ENCODE measurements at regions of chr5 and their contacts with region 1.

Region 1: DNA sequence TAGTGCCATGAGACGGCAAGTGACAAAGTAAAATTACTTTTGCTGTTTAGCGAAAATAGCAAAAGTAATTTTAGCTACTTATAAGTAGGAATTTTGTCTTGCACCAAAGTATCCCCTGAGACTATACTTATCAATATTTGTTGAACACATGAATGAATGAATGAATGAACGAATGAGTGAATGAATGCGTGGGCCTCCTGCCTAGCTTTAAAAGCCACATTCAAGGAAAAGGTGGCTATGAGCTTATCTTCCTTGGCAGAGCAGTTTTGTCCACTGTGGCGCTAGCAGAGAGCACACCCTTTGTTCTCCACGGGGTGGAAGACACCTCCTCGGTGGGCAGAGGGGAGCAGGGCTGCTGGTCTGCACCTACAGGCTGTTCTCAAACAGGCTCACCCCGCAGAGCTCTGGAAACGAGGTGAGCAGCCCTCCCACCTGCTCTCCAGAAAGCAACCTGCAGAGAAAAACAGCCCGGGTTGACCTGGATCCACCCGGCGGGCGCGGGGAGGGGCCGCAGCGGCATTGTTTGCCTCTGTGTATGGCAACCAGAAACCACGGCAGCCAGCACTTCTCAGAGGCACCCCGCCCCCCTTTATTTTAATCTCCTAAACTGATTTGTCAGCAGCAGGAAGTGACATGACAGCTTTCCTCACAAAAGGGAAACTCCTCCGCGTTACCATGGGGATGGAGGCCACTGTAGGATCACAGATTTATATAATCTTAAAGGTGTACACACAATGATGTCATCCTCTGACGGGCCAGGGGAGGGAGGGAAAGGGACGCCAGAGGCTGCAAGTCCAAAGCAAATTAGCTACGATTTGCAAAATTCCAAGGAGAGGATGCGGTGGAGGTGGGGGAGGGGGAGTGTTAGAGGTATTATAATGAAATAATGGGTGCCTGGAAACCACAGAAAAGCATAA is 5.9 kb downstream of the DUSP1 start:
- DNase-seq: peak; percentile 90 to 99
- ATAC-seq: peak; percentile 62 to 82 (median 64)
- H3K4me3 ChIP-seq: peak overlapping the region; percentile 43
- H3K4me3 Mint-ChIP-seq: peak overlapping the region; percentile 90
- H3K27ac ChIP-seq: peak overlapping the region; percentile 92
- H3K27ac Mint-ChIP-seq: peak overlapping the region; percentile 98 to 99
- H3K4me1 ChIP-seq: peaks cover 42% of the 10 kb centered on the region
- H3K4me1 Mint-ChIP-seq: peaks cover 46 to 54% of the 10 kb centered on the region in 2 donors
- H3K27me3 ChIP-seq: no peaks in the 10 kb centered on the region
- H3K27me3 Mint-ChIP-seq: no peaks in the 10 kb centered on the region
- CTCF ChIP-seq: no peak

Region 2: GRCh38 chr5:172179361-172179989 is 585.6 kb before region 1 on chr5:
- intact Hi-C with region 1: loop called (anchors 5 kb)
- DNase-seq: peak; percentile 60 to 76
- ATAC-seq: peak; percentile 24 to 38 (median 28)
- H3K4me3 ChIP-seq: peak overlapping the region; percentile 28
- H3K4me3 Mint-ChIP-seq: peak overlapping the region; percentile 90
- H3K27ac ChIP-seq: peak overlapping the region; percentile 95
- H3K27ac Mint-ChIP-seq: peak overlapping the region; percentile 97 to 98
- H3K4me1 ChIP-seq: peaks cover 98% of the 10 kb centered on the region
- H3K4me1 Mint-ChIP-seq: peaks cover 76 to 77% of the 10 kb centered on the region in 2 donors
- H3K27me3 ChIP-seq: no peaks in the 10 kb centered on the region
- H3K27me3 Mint-ChIP-seq: no peaks in the 10 kb centered on the region
- CTCF ChIP-seq: no peak

Region 3: GRCh38 chr5:172733131-172733973 is 31.8 kb before region 1 on chr5:
- intact Hi-C with region 1: no loop called
- DNase-seq: no peak
- ATAC-seq: no peak
- H3K4me3 ChIP-seq: no peak overlapping the region
- H3K4me3 Mint-ChIP-seq: no peak overlapping the region
- H3K27ac ChIP-seq: no peak overlapping the region
- H3K27ac Mint-ChIP-seq: no peak overlapping the region
- H3K4me1 ChIP-seq: no peaks in the 10 kb centered on the region
- H3K4me1 Mint-ChIP-seq: no peaks in the 10 kb centered on the region
- H3K27me3 ChIP-seq: no peaks in the 10 kb centered on the region
- H3K27me3 Mint-ChIP-seq: peaks cover 24% of the 10 kb centered on the region in 2 donors
- CTCF ChIP-seq: no peak

Region 4: DNA sequence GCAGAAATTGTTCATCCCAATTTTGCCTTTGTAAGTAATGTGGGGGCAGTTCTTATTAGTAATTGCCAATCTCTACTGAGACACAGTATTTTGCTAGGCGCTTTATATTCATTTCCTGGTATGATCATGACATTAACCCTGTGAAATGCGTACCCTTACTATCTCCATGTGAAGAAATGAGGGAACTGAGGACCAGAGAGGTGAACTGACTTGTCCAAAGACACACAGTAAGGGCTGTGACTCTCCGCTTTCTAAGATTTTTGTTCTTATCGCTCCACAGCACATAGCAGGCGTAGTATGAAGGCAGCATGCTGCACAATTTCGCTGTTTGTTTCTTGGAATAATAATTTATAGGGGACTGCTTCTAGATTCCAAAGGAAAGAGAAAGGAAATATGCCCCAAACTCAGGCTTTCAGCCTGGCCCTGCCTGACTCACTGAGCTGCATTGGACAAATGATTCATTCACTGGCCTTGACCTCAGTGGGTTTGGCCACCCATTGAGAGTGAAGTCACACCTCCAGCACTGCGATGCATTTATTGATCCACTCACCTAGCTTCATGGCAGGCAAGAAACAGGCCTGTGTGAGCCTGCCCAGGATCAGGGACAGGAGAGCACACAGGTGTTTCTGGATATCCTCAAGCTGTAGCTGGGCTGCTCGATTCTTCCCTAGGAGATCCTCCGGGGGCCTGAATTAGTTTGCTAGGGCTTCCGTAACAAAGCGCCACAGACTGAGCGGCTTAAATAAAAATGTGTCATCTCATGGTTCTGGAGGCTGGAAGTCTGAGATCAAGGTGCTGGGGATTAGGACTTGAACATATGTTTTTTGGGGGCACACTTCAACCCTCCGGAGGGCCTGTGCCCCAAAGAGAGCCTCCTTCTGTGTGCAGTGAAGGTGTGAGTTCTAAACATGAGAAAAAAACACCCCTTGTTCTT is 13.0 kb after region 1 on chr5:
- intact Hi-C with region 1: loop called (anchors 1 kb)
- DNase-seq: peak; percentile 31 to 41
- ATAC-seq: peak; percentile 46 to 61 (median 51)
- H3K4me3 ChIP-seq: peak overlapping the region; percentile 8
- H3K4me3 Mint-ChIP-seq: peak overlapping the region; percentile 45
- H3K27ac ChIP-seq: peak overlapping the region; percentile 97
- H3K27ac Mint-ChIP-seq: peak overlapping the region; percentile 97 to 98
- H3K4me1 ChIP-seq: peaks cover 46% of the 10 kb centered on the region
- H3K4me1 Mint-ChIP-seq: peaks cover 31 to 46% of the 10 kb centered on the region in 2 donors
- H3K27me3 ChIP-seq: no peaks in the 10 kb centered on the region
- H3K27me3 Mint-ChIP-seq: no peaks in the 10 kb centered on the region
- CTCF ChIP-seq: no peak

Region 5: GRCh38 chr5:172833686-172834414 is 68.7 kb after region 1 on chr5 and contains the start of gene ERGIC1:
- intact Hi-C with region 1: loop called (anchors 1 kb)
- DNase-seq: peak; percentile 78 to 79
- ATAC-seq: peak; percentile 74 to 89 (median 87)
- H3K4me3 ChIP-seq: peak within 1 kb of the TSS; percentile 67
- H3K4me3 Mint-ChIP-seq: peak within 1 kb of the TSS; percentile 90
- H3K27ac ChIP-seq: peak within 1 kb of the TSS; percentile 90
- H3K27ac Mint-ChIP-seq: peak within 1 kb of the TSS; percentile 95 to 96
- H3K4me1 ChIP-seq: peaks cover 53% of the 10 kb centered on the region
- H3K4me1 Mint-ChIP-seq: peaks cover 37 to 48% of the 10 kb centered on the region in 2 donors
- H3K27me3 ChIP-seq: no peaks in the 10 kb centered on the region
- H3K27me3 Mint-ChIP-seq: no peaks in the 10 kb centered on the region
- CTCF ChIP-seq: no peak
- total RNA-seq, gene ERGIC1: 86.2 to 126 (median 121) TPM

Region 6: DNA sequence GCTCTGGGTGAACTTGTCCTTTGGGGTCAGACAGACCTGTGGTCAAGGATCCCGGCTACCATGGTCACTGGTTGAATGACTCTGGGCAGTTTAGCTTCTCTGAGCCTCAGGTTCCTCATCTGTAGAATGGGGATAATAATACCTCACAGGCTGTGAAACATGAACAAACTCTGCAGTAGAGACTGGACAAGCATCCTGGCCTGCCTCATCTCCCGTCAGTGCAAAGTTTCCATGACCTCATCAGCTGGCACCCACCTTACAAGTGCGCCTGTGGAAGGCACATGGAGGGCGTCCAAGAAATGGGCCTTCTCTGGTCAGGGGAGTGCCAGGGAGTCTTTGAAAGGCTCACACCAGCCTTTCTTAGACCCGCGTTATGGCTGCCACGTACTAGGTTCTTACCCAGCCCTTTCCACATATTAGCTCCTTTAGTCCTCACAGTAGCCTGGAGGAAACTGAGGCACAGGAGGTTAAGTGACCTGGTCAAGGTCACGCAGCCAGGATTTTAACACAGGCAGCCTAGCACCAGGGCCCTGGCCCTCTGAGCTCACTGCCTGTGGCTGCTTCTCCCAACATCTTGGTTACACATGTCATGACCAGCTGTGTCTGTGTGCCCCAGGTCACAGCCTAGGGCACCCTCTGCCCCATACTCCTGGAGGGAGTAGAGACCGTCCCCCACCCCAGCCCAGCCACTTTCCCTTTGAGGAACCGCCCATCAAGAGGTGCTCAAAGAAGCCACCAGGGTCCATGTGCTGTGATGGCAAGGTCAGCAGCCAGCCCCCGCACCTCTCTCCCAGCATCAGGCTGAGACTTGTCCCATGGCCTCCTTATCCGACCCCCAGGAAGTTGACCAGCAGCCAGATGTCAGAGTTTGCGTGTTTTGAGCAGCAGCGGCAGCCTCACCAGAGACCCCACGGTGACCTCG is 154.7 kb after region 1 on chr5:
- intact Hi-C with region 1: loop called (anchors 5 kb)
- DNase-seq: no peak
- ATAC-seq: no peak
- H3K4me3 ChIP-seq: no peak overlapping the region
- H3K4me3 Mint-ChIP-seq: no peak overlapping the region
- H3K27ac ChIP-seq: no peak overlapping the region
- H3K27ac Mint-ChIP-seq: peak overlapping the region; percentile 55 to 87
- H3K4me1 ChIP-seq: peaks cover 24% of the 10 kb centered on the region
- H3K4me1 Mint-ChIP-seq: peaks cover 22 to 43% of the 10 kb centered on the region in 2 donors
- H3K27me3 ChIP-seq: no peaks in the 10 kb centered on the region
- H3K27me3 Mint-ChIP-seq: no peaks in the 10 kb centered on the region
- CTCF ChIP-seq: no peak

Measured in natural killer cell (primary cell).